H1 (cell line): ENCODE measurements at regions of chr12 and their contacts with region 1.

Region 1: GRCh38 chr12:67943226-67943892 is 45.9 kb upstream of the IFNG-AS1 start:
- DNase-seq: peak in 1 of 2 experiments; percentile 64
- H3K4me3 ChIP-seq: no peak overlapping the region
- H3K27ac ChIP-seq: no peak overlapping the region
- H3K4me1 ChIP-seq: peaks cover 0 to 6% (median 2%) of the 10 kb centered on the region in 4 experiments; a peak in 3 of 7 replicates
- H3K27me3 ChIP-seq: no peaks in the 10 kb centered on the region
- CTCF ChIP-seq: peak in 2 of 3 experiments; percentile 49 to 73; a peak in 2 of 4 replicates
- EP300 ChIP-seq: no peak
- POLR2A ChIP-seq: no peak
- RAD21 ChIP-seq: peak; percentile 79 to 80

Region 2: DNA sequence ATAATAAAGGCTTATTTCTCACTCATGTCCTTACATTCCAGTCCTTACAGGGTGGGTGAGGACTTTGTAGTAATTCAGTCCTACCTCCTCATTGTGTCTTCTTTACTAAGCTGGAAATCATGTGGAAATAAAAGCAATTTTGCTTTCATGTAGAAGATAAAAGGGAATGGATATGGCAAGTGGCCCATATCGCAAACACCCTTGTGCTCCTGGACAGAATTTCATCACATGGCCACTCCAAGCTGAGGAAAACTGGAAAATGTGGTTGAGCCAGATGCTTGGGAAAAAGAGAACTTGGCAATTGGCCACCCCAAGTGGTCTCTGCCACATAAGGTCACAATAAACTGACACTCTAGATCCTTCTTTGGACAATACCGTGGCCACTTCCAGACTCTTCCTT is 18.3 kb before region 1 on chr12:
- CTCF ChIA-PET with region 1: interaction called, 28 read pairs
- POLR2A ChIA-PET with region 1: no interaction called
- DNase-seq: no peak
- H3K4me3 ChIP-seq: no peak overlapping the region
- H3K27ac ChIP-seq: no peak overlapping the region
- H3K4me1 ChIP-seq: peaks cover 4 to 11% (median 9%) of the 10 kb centered on the region in 4 experiments; a peak in 6 of 7 replicates
- H3K27me3 ChIP-seq: no peaks in the 10 kb centered on the region
- CTCF ChIP-seq: no peak
- EP300 ChIP-seq: no peak
- POLR2A ChIP-seq: no peak
- RAD21 ChIP-seq: no peak

Region 3: DNA sequence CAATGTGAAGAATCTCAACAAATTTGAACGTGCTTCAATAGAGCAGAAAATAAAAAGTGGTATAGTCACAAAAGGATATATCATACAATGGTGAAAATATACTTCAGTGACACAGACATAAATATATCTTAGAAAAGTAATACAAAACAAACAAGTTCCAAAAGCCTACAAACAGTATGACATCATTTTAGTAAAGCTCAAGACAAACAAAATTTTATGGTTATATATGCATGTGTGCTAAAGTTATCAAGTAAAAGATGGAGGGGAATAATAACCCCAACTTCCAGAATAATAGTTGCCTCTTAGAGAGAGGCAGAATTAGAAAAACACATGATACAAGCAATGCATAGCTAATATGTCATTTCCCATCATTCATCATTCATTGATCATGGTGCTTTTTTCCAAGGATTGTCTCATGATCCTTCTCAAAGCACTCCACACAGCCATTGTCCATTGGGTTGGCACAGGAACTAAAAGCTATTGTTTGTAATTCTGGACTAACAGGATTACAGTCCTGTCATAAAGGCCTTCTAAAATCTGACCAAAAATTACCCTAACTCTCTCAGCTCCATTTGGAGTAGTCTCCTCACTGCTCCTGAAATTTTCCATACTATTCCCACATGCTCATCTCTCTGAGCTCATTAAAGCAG is 105.4 kb after region 1 on chr12:
- CTCF ChIA-PET with region 1: no interaction called
- POLR2A ChIA-PET with region 1: no interaction called
- DNase-seq: no peak
- H3K4me3 ChIP-seq: no peak overlapping the region
- H3K27ac ChIP-seq: no peak overlapping the region
- H3K4me1 ChIP-seq: no peaks in the 10 kb centered on the region
- H3K27me3 ChIP-seq: no peaks in the 10 kb centered on the region
- CTCF ChIP-seq: no peak
- EP300 ChIP-seq: no peak
- POLR2A ChIP-seq: no peak
- RAD21 ChIP-seq: no peak